Pancreas (tissue), 10 donors: ENCODE measurements at regions of chr14 and their contacts with region 1.

Region 1: DNA sequence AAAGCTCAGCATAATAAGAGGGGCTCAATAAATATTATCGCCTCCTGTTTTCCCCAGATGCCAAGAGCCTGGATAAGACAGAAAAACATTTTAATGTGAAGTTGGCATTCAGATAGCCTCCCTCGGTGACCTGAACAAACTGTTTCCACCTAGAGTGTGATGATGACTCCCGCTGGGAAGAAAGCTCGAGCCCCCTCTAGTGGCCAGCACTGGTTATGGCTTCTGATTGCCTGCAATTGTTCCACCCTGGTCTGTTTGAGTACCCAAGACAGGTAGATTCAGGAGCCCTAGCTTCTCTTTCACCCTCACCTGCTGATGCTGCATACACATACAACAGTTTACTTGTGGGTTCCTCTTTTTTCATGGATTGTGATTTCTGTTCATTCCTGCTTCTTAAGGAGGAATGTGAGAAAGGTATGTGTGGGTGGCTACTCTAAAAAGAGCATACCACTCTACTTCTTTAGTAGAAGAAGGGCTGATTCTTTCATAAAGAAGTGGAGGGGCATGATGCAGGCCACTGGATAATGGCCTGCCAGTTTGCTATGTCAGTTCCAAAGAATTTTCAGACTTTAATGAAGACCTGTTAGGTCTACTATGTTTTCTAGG is 6.4 kb downstream of the ERG28 start:
- DNase-seq: peak; percentile 61 to 92 (median 85)
- ATAC-seq: peak; percentile 92 to 99 (median 96)
- H3K4me3 ChIP-seq: no peak overlapping the region
- H3K27ac ChIP-seq: no peak overlapping the region
- H3K4me1 ChIP-seq: no peaks in the 10 kb centered on the region
- H3K27me3 ChIP-seq: no peaks in the 10 kb centered on the region
- CTCF ChIP-seq: peak; percentile 91 to 95 (median 94)

Region 2: GRCh38 chr14:75577729-75578101 is 76.5 kb before region 1 on chr14:
- intact Hi-C with region 1: loop called (anchors 5 to 10 kb)
- DNase-seq: peak; percentile 75 to 92 (median 84)
- ATAC-seq: peak; percentile 91 to 95 (median 94)
- H3K4me3 ChIP-seq: peak overlapping the region; percentile 13 to 46 (median 27)
- H3K27ac ChIP-seq: peak overlapping the region in 3 of 4 donors; percentile 5 to 71 (median 19)
- H3K4me1 ChIP-seq: peaks cover 6 to 10% (median 7%) of the 10 kb centered on the region in 3 donors
- H3K27me3 ChIP-seq: no peaks in the 10 kb centered on the region
- CTCF ChIP-seq: peak; percentile 26 to 60 (median 52)

Region 3: DNA sequence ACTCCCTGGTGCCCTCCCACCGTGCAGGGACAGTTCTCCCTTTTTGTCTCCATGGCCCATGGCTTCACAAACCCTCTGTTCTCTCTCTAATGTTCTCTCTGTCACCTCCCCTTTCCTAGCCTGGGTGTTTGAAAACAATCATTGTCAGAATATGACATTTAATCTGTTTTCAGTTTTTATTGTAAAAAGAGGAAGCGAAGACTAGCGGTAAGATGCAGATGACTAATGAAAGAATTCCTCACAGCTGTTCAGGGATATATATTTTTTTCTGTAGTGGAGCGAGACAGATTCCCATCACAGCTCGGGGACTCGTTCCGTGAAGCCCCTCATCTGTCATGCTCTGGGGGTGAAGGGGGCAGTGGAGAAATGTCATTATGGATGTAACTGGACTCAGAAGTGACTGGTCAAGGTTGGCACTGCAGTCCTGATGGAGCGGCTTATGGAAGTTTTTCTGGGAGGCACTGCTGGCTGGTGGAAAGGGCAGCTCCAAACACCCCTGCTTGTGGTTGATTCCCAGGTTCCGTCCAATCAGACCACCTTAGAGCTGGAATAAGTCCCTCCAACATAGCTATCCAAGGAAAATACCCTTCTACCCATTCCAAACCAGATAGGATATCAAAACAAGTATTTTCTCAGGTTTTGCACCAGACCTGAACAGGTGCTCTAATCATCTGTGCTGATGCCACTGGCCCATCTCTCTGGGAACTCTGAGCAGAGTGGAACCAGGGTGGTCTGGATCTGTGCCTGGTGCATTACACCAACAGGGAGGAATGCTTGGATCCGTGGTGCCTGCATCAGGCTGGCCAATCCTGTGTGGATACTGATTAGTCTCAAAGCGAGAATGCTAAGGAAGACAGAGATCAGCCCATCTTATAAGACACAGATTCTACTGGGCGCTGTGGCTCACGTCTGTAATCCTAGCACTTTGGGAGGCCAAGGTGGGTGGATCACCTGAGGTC is 582.2 kb after region 1 on chr14:
- intact Hi-C with region 1: no loop called
- DNase-seq: no peak
- ATAC-seq: no peak
- H3K4me3 ChIP-seq: no peak overlapping the region
- H3K27ac ChIP-seq: no peak overlapping the region
- H3K4me1 ChIP-seq: no peaks in the 10 kb centered on the region
- H3K27me3 ChIP-seq: no peaks in the 10 kb centered on the region
- CTCF ChIP-seq: no peak

Region 4: DNA sequence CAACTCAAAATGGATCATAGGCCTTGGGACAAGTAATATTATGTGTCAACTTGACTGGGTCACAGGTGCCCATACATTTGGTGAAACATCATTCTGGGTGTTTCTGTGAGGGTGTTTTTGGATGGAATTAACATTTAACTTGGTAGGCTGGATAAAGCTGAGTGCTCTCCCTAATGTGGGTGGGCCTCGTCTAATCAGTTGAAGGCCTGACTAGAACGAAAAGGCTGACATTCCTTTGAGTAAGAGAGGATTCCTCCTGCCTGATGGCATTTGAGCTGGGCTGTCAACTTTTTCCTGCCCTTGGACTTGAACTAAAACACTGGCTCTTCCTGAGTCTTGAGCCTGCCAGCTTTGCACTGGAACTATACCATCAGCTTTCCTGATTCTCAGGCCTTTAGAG is 628.4 kb after region 1 on chr14:
- intact Hi-C with region 1: no loop called
- DNase-seq: no peak
- ATAC-seq: no peak
- H3K4me3 ChIP-seq: no peak overlapping the region
- H3K27ac ChIP-seq: no peak overlapping the region
- H3K4me1 ChIP-seq: no peaks in the 10 kb centered on the region
- H3K27me3 ChIP-seq: no peaks in the 10 kb centered on the region
- CTCF ChIP-seq: no peak